Breast epithelium (tissue), 4 donors: ENCODE measurements at regions of chr12 and their contacts with region 1.

Region 1: DNA sequence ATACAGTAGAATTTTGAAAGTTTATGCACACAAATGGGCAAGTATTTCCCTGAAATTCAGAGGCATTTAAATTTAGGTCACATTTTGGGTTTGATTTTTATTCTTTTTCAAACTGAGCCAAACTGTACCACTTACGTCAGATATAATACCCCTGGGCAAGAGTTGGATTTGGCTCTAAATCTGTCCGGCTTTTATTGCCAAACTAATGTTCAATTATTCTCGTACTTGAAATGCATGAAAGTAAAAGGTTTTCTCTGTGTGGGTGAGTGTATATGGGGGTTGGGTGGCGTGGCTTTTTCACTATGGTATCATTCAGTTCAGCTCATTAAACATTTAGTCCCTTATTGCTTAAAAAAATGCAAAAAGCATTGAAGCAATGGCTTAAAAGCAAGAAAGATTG is 55.9 kb downstream of the SLCO1C1 start:
- DNase-seq: no peak
- H3K4me3 ChIP-seq: no peak overlapping the region
- H3K27ac ChIP-seq: no peak overlapping the region
- H3K4me1 ChIP-seq: no peaks in the 10 kb centered on the region
- H3K27me3 ChIP-seq: no peaks in the 10 kb centered on the region
- CTCF ChIP-seq: no peak
- POLR2A ChIP-seq: no peak

Region 2: GRCh38 chr12:20704860-20705259 is 46.2 kb before region 1 on chr12:
- intact Hi-C with region 1: no loop called
- DNase-seq: no peak
- H3K4me3 ChIP-seq: no peak overlapping the region
- H3K27ac ChIP-seq: no peak overlapping the region
- H3K4me1 ChIP-seq: no peaks in the 10 kb centered on the region
- H3K27me3 ChIP-seq: no peaks in the 10 kb centered on the region
- CTCF ChIP-seq: no peak
- POLR2A ChIP-seq: no peak

Region 3: DNA sequence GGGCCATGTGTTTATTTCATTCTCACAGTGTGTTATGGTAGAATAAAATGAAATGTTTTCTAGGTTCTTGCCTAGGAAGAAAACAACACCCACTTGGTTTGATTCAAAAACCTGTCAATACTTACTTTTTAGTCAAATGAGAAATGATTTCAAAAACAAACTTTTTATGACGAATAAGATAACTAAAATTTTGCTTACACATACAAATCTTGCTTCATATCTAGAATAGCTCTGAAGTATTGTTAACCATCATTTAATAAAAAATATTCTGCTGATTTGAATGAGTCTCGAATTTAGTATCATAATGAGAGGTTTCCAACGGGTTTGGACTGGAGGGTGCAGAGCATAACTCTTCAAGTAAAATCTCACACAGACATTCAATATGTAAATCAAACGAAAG is 32.8 kb before region 1 on chr12:
- intact Hi-C with region 1: loop called (anchors 2 kb)
- DNase-seq: no peak
- H3K4me3 ChIP-seq: no peak overlapping the region
- H3K27ac ChIP-seq: no peak overlapping the region
- H3K4me1 ChIP-seq: no peaks in the 10 kb centered on the region
- H3K27me3 ChIP-seq: no peaks in the 10 kb centered on the region
- CTCF ChIP-seq: no peak
- POLR2A ChIP-seq: no peak

Region 4: GRCh38 chr12:21220266-21220665 is 469.2 kb after region 1 on chr12:
- intact Hi-C with region 1: no loop called
- DNase-seq: no peak
- H3K4me3 ChIP-seq: no peak overlapping the region
- H3K27ac ChIP-seq: no peak overlapping the region
- H3K4me1 ChIP-seq: no peaks in the 10 kb centered on the region
- H3K27me3 ChIP-seq: no peaks in the 10 kb centered on the region
- CTCF ChIP-seq: no peak
- POLR2A ChIP-seq: no peak